ENCODE measurements at regions of chr6 and their contacts with region 1.

Region 1: DNA sequence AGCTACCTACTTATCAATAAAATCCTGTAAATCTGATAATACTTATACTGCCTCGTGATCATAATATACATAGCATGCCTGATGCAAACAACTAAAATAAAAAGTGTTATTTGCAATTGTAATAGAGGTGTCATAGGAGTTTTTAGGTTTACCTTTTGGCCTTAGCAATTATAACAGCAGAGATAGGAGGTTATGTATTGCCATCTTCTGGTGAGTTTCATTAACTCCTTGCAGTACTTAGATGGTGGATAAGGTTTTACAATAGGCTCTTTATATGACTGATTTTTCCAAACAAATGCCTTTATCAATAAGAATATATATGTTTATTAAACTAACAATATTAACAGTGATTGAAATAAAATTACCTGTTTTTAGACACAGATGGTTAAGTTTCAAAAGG is 27.8 kb upstream of the MYCT1 start:
- DNase-seq: no peak
- ATAC-seq: no peak
- H3K4me3 ChIP-seq: no peak overlapping the region
- H3K27ac ChIP-seq: no peak overlapping the region
- H3K4me1 ChIP-seq: peaks cover 0 to 15% (median 0%) of the 10 kb centered on the region in 9 donors
- H3K27me3 ChIP-seq: peaks cover 0 to 2% (median 0%) of the 10 kb centered on the region in 7 donors
- CTCF ChIP-seq: peak in 8 of 9 donors; percentile 23 to 67 (median 53)

Region 2: GRCh38 chr6:152484806-152485205 is 185.1 kb before region 1 on chr6:
- intact Hi-C with region 1: loop called in 1 of 10 experiments (anchors 10 kb)
- DNase-seq: no peak
- ATAC-seq: no peak
- H3K4me3 ChIP-seq: no peak overlapping the region
- H3K27ac ChIP-seq: no peak overlapping the region
- H3K4me1 ChIP-seq: no peaks in the 10 kb centered on the region
- H3K27me3 ChIP-seq: no peaks in the 10 kb centered on the region
- CTCF ChIP-seq: no peak

Region 3: DNA sequence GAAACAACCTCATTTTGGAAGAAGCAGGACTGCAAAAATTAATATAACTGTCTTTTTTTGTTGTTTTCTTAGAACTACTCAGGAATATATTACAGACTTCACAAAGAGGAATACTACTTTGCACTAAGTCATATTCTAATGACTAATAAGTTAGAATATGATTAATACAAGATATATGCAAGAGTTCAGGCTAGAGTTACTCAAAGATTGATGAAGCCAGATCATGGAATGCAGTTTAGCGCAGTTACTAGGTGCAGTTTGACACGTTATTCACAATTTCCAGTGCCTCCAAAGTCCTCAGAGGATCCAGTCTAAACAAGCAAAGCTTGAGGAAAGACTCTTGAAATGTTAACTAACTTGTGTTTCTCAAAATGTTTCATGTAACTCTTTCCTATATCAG is 26.6 kb after region 1 on chr6:
- intact Hi-C with region 1: no loop called
- DNase-seq: no peak
- ATAC-seq: peak in 1 of 8 donors; percentile 30
- H3K4me3 ChIP-seq: peak overlapping the region in 1 of 10 donors; percentile 33
- H3K27ac ChIP-seq: peak overlapping the region; percentile 10 to 85 (median 63)
- H3K4me1 ChIP-seq: peaks cover 0 to 31% (median 0%) of the 10 kb centered on the region in 9 donors
- H3K27me3 ChIP-seq: peaks cover 0 to 11% (median 0%) of the 10 kb centered on the region in 7 donors
- CTCF ChIP-seq: no peak